ENCODE measurements at regions of chr16 and their contacts with region 1.

Region 1: DNA sequence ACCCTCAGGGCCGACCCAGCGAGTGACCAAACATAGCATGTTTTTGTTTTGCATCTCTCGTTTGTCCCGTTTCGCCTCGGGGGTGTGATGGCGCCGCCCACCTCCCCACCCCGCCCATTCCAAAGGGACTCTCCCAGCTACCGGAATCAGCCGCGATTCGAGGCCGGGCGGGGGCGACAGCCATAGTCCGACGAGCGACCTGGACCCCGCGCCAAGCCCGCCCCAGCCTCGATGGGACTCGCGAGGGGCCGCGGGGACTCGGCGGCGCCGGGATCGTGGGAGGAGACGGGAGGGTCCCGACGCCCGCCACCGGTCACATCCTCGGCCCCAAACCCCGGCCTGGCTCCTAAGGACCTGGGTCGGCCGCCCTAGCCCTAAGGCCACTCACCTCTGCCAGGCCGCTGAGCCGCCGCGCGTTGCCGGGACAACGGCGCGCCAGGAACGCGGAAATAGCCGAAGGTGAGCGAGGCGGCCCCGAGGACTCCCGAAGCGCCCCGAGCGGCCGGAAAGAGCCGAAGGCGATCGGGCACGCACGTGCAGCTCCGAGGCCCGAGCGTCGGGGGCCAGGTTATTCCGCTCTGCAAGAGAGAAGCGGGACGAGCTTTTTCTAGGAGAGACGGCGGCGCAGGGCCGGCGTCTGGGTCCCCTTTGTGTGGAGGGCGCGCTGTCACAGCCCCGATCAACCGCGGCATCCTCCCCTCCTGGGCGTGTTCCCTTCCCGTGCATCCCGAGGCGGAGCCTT is 1.4 kb downstream of the IFT140 start:
- DNase-seq: peak; percentile 95
- ATAC-seq: peak; percentile 67
- H3K4me3 Mint-ChIP-seq: peak overlapping the region; percentile 88
- H3K27ac Mint-ChIP-seq: peak overlapping the region; percentile 97
- H3K4me1 Mint-ChIP-seq: peaks cover 21% of the 10 kb centered on the region
- H3K27me3 Mint-ChIP-seq: peaks cover 2% of the 10 kb centered on the region

Region 2: GRCh38 chr16:401468-402348 is 1208.7 kb before region 1 on chr16 and contains the start of gene DECR2:
- CTCF ChIA-PET with region 1: no interaction called
- POLR2A ChIA-PET with region 1: no interaction called
- intact Hi-C with region 1: loop called in 1 of 2 experiments (anchors 10 kb)
- DNase-seq: peak; percentile 100
- ATAC-seq: peak; percentile 87
- H3K4me3 Mint-ChIP-seq: peak within 1 kb of the TSS; percentile 82
- H3K27ac Mint-ChIP-seq: peak within 1 kb of the TSS; percentile 87
- H3K4me1 Mint-ChIP-seq: peaks cover 10% of the 10 kb centered on the region
- H3K27me3 Mint-ChIP-seq: no peaks in the 10 kb centered on the region
- total RNA-seq, gene DECR2: 11.5 to 13.0 TPM

Region 3: GRCh38 chr16:1351582-1352362 is 258.7 kb before region 1 on chr16 and contains the starts of genes GNPTG and TSR3:
- CTCF ChIA-PET with region 1: no interaction called
- POLR2A ChIA-PET with region 1: no interaction called
- intact Hi-C with region 1: loop called in 1 of 2 experiments (anchors 2 kb)
- DNase-seq: peak; percentile 91
- ATAC-seq: peak; percentile 87
- H3K4me3 Mint-ChIP-seq: peak within 1 kb of the TSS; percentile 85
- H3K27ac Mint-ChIP-seq: peak within 1 kb of the TSS; percentile 79
- H3K4me1 Mint-ChIP-seq: peaks cover 37% of the 10 kb centered on the region
- H3K27me3 Mint-ChIP-seq: no peaks in the 10 kb centered on the region
- total RNA-seq, gene GNPTG: 16.3 to 17.4 TPM
- total RNA-seq, gene TSR3: 37.6 to 58.7 TPM

Region 4: GRCh38 chr16:1533443-1533951 is 77.0 kb before region 1 on chr16 and contains the start of gene TMEM204:
- CTCF ChIA-PET with region 1: no interaction called
- POLR2A ChIA-PET with region 1: no interaction called
- intact Hi-C with region 1: loop called (anchors 2 to 5 kb)
- DNase-seq: peak; percentile 66
- ATAC-seq: peak; percentile 25
- H3K4me3 Mint-ChIP-seq: peak within 1 kb of the TSS; percentile 95
- H3K27ac Mint-ChIP-seq: peak within 1 kb of the TSS; percentile 94
- H3K4me1 Mint-ChIP-seq: peaks cover 39% of the 10 kb centered on the region
- H3K27me3 Mint-ChIP-seq: no peaks in the 10 kb centered on the region
- total RNA-seq, gene TMEM204: 12.6 to 17.5 TPM

Region 5: DNA sequence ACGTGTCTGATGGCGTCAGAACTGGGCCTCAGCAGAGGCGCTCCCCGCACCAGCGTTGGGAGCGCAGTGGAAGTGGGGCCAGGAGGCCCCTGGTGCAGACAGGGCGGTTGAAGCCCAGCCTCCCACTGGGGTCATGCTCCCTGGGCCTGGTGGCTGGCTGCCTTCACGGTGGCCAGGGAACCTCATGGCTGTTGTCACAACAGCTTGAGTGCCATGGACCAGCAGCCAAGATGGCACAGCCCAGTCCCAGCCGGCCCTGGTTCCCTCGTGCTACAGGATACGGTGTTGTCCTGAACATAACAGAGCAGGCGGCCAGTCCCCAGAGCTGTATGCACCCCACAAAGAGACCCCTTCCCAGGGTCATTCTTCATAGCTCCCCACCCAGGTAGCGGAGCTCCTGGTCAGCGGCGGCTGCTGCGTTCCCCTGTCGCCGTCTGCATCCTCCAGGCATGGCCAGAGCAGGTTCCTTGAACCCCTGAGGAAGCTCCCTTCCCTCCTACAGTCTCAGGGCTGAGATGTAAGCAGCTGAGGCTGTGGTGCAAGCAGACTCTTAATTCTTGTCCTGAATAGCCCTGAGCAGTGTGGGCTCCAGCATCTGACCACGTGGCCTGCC is 131.2 kb after region 1 on chr16:
- CTCF ChIA-PET with region 1: no interaction called
- POLR2A ChIA-PET with region 1: no interaction called
- intact Hi-C with region 1: no loop called
- DNase-seq: no peak
- ATAC-seq: no peak
- H3K4me3 Mint-ChIP-seq: no peak overlapping the region
- H3K27ac Mint-ChIP-seq: no peak overlapping the region
- H3K4me1 Mint-ChIP-seq: no peaks in the 10 kb centered on the region
- H3K27me3 Mint-ChIP-seq: no peaks in the 10 kb centered on the region

Region 6: GRCh38 chr16:1772736-1773584 is 162.5 kb after region 1 on chr16 and contains the starts of genes EME2 and MRPS34:
- CTCF ChIA-PET with region 1: no interaction called
- POLR2A ChIA-PET with region 1: no interaction called
- intact Hi-C with region 1: loop called in 1 of 2 experiments (anchors 1 kb)
- DNase-seq: peak; percentile 90
- ATAC-seq: peak; percentile 53
- H3K4me3 Mint-ChIP-seq: peak within 1 kb of the TSS; percentile 94
- H3K27ac Mint-ChIP-seq: peak within 1 kb of the TSS; percentile 99
- H3K4me1 Mint-ChIP-seq: peaks cover 9% of the 10 kb centered on the region
- H3K27me3 Mint-ChIP-seq: no peaks in the 10 kb centered on the region
- total RNA-seq, gene EME2: 13.1 to 18.4 TPM
- total RNA-seq, gene MRPS34: 146 to 175 TPM

Region 7: GRCh38 chr16:1964506-1965395 is 354.3 kb after region 1 on chr16 and contains the start of gene RPS2:
- CTCF ChIA-PET with region 1: no interaction called
- POLR2A ChIA-PET with region 1: no interaction called
- intact Hi-C with region 1: loop called in 1 of 2 experiments (anchors 2 kb)
- DNase-seq: peak; percentile 100
- ATAC-seq: peak; percentile 81
- H3K4me3 Mint-ChIP-seq: peak within 1 kb of the TSS; percentile 96
- H3K27ac Mint-ChIP-seq: peak within 1 kb of the TSS; percentile 99
- H3K4me1 Mint-ChIP-seq: peaks cover 38% of the 10 kb centered on the region
- H3K27me3 Mint-ChIP-seq: no peaks in the 10 kb centered on the region
- total RNA-seq, gene RPS2: 5,351 to 6,287 TPM

Region 8: GRCh38 chr16:2340564-2341455 is 730.4 kb after region 1 on chr16 and contains the start of gene ABCA3:
- CTCF ChIA-PET with region 1: no interaction called
- POLR2A ChIA-PET with region 1: no interaction called
- intact Hi-C with region 1: loop called in 1 of 2 experiments (anchors 2 kb)
- DNase-seq: peak; percentile 97
- ATAC-seq: peak; percentile 92
- H3K4me3 Mint-ChIP-seq: peak within 1 kb of the TSS; percentile 82
- H3K27ac Mint-ChIP-seq: peak within 1 kb of the TSS; percentile 21
- H3K4me1 Mint-ChIP-seq: peaks cover 13% of the 10 kb centered on the region
- H3K27me3 Mint-ChIP-seq: peaks cover 7% of the 10 kb centered on the region
- total RNA-seq, gene ABCA3: 6.0 to 7.2 TPM

Measured in activated CD4-positive, alpha-beta T cell treated with anti-CD3 and anti-CD28 coated beads for 36 hours (primary cell).